A549 (cell line): ENCODE measurements at regions of chr10 and their contacts with region 1.

Region 1: GRCh38 chr10:132354356-132355094 is 22.5 kb downstream of the LRRC27 start:
- DNase-seq: no peak
- ATAC-seq: no peak
- H3K4me3 ChIP-seq: no peak overlapping the region
- H3K27ac ChIP-seq: no peak overlapping the region
- H3K4me1 ChIP-seq: no peaks in the 10 kb centered on the region
- CTCF ChIP-seq: no peak
- EP300 ChIP-seq: no peak
- POLR2A ChIP-seq: no peak
- RAD21 ChIP-seq: no peak

Region 2: GRCh38 chr10:132344386-132344785 is 10.1 kb before region 1 on chr10:
- CTCF ChIA-PET with region 1: interaction called, 13 read pairs
- POLR2A ChIA-PET with region 1: no interaction called
- DNase-seq: no peak
- ATAC-seq: no peak
- H3K4me3 ChIP-seq: no peak overlapping the region
- H3K27ac ChIP-seq: no peak overlapping the region
- H3K4me1 ChIP-seq: no peaks in the 10 kb centered on the region
- CTCF ChIP-seq: no peak
- EP300 ChIP-seq: no peak
- POLR2A ChIP-seq: no peak
- RAD21 ChIP-seq: no peak

Region 3: DNA sequence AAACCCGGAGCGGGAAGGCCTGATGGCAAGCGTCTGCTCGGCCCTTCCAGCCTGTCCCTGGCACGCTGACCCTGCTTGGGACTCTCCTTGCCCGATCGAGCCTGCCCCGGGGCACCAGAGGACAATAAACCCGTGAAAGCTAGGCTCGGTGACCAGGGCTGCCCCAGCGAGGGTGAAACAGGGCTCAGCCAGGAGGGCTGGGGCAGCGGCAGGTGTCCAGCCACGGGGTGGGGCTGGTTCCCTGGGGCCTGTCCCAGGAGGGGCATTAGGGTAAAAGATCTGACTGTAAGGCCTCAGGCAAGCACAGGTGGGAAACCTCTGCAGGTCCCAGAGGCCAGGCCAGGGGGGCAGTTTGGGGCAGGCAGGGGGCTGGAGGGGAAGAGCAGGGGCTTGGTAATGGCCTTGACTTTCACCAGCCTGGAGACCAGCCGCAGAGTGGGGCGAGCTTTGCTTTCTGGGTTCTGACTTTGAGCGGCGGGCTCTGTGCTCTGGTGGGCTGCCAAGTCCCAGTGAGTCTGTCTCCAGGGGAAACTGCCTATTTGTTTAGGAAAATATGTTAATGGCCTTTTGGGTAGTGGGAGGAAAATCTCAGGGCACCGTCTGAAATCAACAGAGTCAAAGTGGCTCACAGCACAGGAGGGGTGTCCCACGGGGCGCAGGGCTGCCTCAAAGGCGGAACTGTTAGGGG is 114.8 kb after region 1 on chr10:
- CTCF ChIA-PET with region 1: no interaction called
- POLR2A ChIA-PET with region 1: no interaction called
- DNase-seq: no peak
- ATAC-seq: no peak
- H3K4me3 ChIP-seq: no peak overlapping the region
- H3K27ac ChIP-seq: no peak overlapping the region
- H3K4me1 ChIP-seq: no peaks in the 10 kb centered on the region
- CTCF ChIP-seq: no peak
- EP300 ChIP-seq: no peak
- POLR2A ChIP-seq: no peak
- RAD21 ChIP-seq: no peak

Region 4: DNA sequence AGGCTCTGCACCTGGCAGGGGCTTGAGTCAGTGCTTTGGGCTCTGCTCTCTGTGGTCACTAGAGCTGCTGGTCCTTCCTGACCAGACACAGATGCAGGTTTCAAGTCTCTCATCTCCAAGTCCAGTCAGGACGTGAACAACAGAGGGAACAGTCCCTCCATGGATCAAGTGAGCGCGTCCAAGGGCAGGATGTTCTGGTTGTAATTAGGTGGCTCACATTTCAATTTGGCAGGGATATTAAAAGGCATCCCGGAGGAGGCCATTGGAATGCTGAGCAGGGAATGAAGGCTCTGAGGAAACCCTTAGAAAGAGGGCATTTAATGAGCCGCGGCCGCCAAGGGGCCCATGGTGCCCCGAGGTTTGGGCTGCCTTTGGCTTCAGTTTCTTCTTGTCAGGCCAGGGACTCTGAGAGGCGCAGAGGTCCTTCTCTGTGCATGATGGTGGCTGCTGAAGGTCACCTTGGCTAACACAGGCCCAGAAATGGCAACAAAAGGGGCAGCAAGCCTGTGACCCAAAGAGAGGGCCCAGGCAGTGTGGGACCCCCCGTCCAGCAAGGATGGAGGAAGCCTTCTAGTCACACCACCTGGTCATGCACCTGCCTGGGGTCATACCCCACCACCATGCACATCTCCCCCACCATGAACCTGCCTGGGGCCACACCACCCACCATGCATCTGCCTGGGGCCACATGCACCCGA is 152.3 kb after region 1 on chr10:
- CTCF ChIA-PET with region 1: no interaction called
- POLR2A ChIA-PET with region 1: no interaction called
- DNase-seq: no peak
- ATAC-seq: no peak
- H3K4me3 ChIP-seq: no peak overlapping the region
- H3K27ac ChIP-seq: no peak overlapping the region
- H3K4me1 ChIP-seq: no peaks in the 10 kb centered on the region
- CTCF ChIP-seq: no peak
- EP300 ChIP-seq: no peak
- POLR2A ChIP-seq: no peak
- RAD21 ChIP-seq: no peak